A549 (cell line): ENCODE measurements at regions of chr2 and their contacts with region 1.

Region 1: GRCh38 chr2:218852911-218853667 is 6.5 kb upstream of the WNT6 start:
- DNase-seq: peak in 1 of 2 experiments; percentile 75
- ATAC-seq: peak; percentile 36 to 73; a peak in 4 of 6 replicates
- H3K4me3 ChIP-seq: no peak overlapping the region
- H3K27ac ChIP-seq: 0 out of 6 replicates have a peak overlapping the region, but pooled peaks of 1 of the 2 experiments have one; percentile 12
- H3K4me1 ChIP-seq: peaks cover 25% of the 10 kb centered on the region
- CTCF ChIP-seq: peak; percentile 83
- EP300 ChIP-seq: no peak
- POLR2A ChIP-seq: no peak
- RAD21 ChIP-seq: peak; percentile 82 to 88

Region 2: DNA sequence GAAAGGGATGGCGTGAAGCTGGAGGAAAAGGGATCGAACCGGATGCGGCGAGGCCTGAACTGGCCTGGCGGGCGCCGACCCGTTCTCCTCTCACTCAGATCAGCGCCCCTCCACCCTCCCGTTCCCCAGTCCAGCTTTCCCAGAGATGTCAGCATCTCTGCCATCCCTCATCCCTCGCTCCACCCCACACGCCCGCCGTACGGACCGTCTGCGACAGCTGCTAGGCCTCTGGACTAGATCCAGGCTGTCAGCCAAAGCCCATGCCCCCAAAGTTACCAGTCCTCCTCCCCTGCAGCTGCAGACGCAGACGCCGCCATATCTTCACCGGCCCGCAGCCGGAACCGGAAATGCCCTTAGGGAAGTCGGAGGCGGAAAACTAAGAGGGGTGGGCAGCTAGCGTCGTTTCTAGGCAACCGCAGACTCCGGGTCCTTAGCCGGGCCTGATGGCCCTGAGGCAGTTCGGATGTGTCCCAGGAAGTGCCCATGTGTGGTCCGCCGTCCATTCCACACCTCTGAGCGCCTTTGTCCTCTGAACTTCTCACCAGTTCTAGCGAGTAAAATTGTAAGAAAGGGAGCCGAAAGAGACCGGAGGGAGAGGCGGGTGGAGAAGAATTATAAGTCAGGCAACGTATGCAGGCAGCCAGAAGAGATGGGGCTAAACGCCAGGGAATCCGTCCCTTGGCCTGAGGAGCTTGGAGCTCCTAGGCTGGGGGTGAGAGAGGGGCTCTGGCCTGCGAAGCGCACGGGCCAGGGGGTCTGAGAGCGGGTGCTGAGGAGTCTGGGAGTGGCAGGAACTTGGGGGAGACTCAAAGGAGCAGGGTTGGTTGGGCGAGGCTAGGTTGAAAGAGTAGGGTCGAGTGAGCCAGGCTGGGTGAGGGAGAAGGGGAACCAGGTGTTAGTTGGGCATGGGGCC is 181.2 kb before region 1 on chr2 and contains the starts of genes RNF25 and STK36:
- CTCF ChIA-PET with region 1: interaction called, 15 read pairs
- POLR2A ChIA-PET with region 1: interaction called, 3 read pairs
- DNase-seq: peak; percentile 84 to 88
- ATAC-seq: peak; percentile 99
- H3K4me3 ChIP-seq: peak within 1 kb of the TSS; percentile 87
- H3K27ac ChIP-seq: peak within 1 kb of the TSS; percentile 84 to 90
- H3K4me1 ChIP-seq: peaks cover 11% of the 10 kb centered on the region; the same call in 2 of the 3 replicates
- CTCF ChIP-seq: no peak
- EP300 ChIP-seq: no peak
- POLR2A ChIP-seq: peak; percentile 88
- RAD21 ChIP-seq: no peak
- polyA plus RNA-seq, gene RNF25: 61.5 and 74.0 TPM in 2 replicates
- polyA plus RNA-seq, gene STK36: 29.9 and 40.8 TPM in 2 replicates

Region 3: DNA sequence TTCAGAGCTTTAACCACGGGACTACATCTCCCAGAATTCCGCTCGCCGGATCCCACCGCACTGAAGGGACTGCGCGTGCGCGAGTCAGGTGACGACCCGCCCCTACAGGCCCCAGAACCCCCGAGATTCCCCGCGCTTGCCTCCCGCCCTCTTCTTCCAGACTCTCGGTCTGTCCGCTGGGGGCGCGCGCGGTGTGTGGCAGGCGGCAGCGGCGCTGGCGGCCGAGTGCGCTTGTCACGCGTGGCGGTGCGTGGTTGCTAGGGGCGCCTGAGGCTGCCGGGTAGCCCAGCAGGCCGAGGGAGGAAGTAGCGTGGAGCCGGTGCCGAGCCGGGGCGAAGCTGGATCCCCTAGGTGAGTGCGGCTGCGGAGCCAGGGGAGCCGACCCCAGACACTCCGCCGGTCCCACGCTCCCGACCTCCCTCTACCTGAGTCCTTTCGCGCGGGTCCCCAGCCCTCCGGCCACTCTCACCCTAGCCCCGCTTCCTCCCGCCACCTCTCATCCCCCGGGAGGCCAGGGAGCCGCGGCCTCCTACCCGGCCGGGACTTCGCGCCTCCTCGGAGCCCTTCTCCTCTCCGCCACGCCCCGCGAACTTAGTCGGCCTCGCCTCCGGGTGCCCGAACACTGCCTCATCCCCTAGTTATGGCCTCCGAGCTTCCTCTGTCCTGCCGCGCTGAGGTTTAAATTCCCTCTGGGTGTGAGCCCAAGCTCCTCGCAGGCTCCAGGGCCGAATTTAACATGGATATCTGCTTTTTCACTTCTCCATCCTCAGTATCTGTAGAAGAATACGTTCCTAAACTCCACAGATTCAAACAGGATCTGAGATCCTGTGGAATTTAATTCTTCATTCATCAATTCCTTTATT is 142.2 kb before region 1 on chr2 and contains the start of gene TTLL4:
- CTCF ChIA-PET with region 1: interaction called, 54 read pairs
- POLR2A ChIA-PET with region 1: no interaction called
- DNase-seq: peak; percentile 95
- ATAC-seq: peak; percentile 97
- H3K4me3 ChIP-seq: peak within 1 kb of the TSS; percentile 93
- H3K27ac ChIP-seq: peak within 1 kb of the TSS; percentile 95 to 98
- H3K4me1 ChIP-seq: peaks cover 10% of the 10 kb centered on the region; the same call in 2 of the 3 replicates
- CTCF ChIP-seq: peak; percentile 74
- EP300 ChIP-seq: no peak
- POLR2A ChIP-seq: peak; percentile 87
- RAD21 ChIP-seq: peak; percentile 58 to 73
- polyA plus RNA-seq, gene TTLL4: 26.2 and 37.0 TPM in 2 replicates

Region 4: GRCh38 chr2:218745559-218746469 is 107.3 kb before region 1 on chr2:
- CTCF ChIA-PET with region 1: interaction called, 10 read pairs
- POLR2A ChIA-PET with region 1: no interaction called
- DNase-seq: no peak
- ATAC-seq: peak in 1 of 2 experiments; percentile 43; a peak in 3 of 6 replicates
- H3K4me3 ChIP-seq: no peak overlapping the region
- H3K27ac ChIP-seq: peak overlapping the region in 1 of 2 experiments; percentile 68; a peak in 3 of 6 replicates
- H3K4me1 ChIP-seq: peaks cover 5% of the 10 kb centered on the region; the same call in 1 of the 3 replicates
- CTCF ChIP-seq: no peak
- EP300 ChIP-seq: no peak
- POLR2A ChIP-seq: no peak
- RAD21 ChIP-seq: no peak

Region 5: GRCh38 chr2:218839430-218839829 is 13.7 kb before region 1 on chr2:
- CTCF ChIA-PET with region 1: interaction called, 24 read pairs
- POLR2A ChIA-PET with region 1: no interaction called
- DNase-seq: no peak
- ATAC-seq: no peak
- H3K4me3 ChIP-seq: no peak overlapping the region
- H3K27ac ChIP-seq: no peak overlapping the region
- H3K4me1 ChIP-seq: no peaks in the 10 kb centered on the region
- CTCF ChIP-seq: no peak
- EP300 ChIP-seq: no peak
- POLR2A ChIP-seq: no peak
- RAD21 ChIP-seq: no peak

Region 6: DNA sequence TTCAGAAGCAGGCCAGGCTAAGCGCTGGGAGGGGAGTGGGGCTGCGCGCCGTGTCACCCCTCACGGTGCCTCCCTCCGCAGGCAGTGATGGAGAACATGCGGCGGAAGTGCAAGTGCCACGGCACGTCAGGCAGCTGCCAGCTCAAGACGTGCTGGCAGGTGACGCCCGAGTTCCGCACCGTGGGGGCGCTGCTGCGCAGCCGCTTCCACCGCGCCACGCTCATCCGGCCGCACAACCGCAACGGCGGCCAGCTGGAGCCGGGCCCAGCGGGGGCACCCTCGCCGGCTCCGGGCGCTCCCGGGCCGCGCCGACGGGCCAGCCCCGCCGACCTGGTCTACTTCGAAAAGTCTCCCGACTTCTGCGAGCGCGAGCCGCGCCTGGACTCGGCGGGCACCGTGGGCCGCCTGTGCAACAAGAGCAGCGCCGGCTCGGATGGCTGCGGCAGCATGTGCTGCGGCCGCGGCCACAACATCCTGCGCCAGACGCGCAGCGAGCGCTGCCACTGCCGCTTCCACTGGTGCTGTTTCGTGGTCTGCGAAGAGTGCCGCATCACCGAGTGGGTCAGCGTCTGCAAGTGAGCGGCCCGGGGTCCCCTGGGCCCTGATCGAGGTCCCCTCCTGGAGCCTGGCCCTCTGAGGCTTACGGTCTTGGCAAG is 39.7 kb after region 1 on chr2:
- CTCF ChIA-PET with region 1: interaction called, 47 read pairs
- POLR2A ChIA-PET with region 1: no interaction called
- DNase-seq: peak; percentile 63 to 64
- ATAC-seq: peak; percentile 64 to 78
- H3K4me3 ChIP-seq: peak overlapping the region; percentile 33
- H3K27ac ChIP-seq: peak overlapping the region; percentile 66 to 81; a peak in 5 of 6 replicates
- H3K4me1 ChIP-seq: peaks cover 33% of the 10 kb centered on the region
- CTCF ChIP-seq: peak; percentile 66
- EP300 ChIP-seq: no peak
- POLR2A ChIP-seq: no peak
- RAD21 ChIP-seq: no peak

Region 7: DNA sequence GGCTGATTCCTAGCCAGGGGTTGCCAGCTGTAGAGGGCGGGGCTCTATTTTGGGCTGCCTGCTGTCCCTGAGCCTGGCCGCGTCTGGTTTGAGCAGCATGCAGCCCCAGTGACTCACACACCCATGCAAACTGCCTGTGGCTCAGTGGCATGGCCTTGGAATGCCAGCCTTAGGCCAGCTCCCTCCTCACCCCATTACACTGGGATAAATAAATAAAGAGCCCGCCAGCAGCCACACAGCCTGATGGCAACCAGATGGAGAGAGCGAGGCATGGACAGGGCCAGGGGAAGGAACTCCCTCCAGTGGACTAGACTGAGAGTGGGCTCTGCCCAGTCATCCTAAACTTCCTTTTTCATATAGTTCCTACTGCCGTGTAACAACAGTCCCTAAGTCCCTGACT is 289.2 kb after region 1 on chr2:
- CTCF ChIA-PET with region 1: no interaction called
- POLR2A ChIA-PET with region 1: no interaction called
- DNase-seq: no peak
- ATAC-seq: peak; percentile 68 to 70; a peak in 4 of 6 replicates
- H3K4me3 ChIP-seq: no peak overlapping the region
- H3K27ac ChIP-seq: no peak overlapping the region
- H3K4me1 ChIP-seq: peaks cover 5% of the 10 kb centered on the region; the same call in 1 of the 3 replicates
- CTCF ChIP-seq: no peak
- EP300 ChIP-seq: no peak
- POLR2A ChIP-seq: no peak
- RAD21 ChIP-seq: no peak